Right lobe of liver (tissue), 6 donors: ENCODE measurements at regions of chr6 and their contacts with region 1.

Region 1: DNA sequence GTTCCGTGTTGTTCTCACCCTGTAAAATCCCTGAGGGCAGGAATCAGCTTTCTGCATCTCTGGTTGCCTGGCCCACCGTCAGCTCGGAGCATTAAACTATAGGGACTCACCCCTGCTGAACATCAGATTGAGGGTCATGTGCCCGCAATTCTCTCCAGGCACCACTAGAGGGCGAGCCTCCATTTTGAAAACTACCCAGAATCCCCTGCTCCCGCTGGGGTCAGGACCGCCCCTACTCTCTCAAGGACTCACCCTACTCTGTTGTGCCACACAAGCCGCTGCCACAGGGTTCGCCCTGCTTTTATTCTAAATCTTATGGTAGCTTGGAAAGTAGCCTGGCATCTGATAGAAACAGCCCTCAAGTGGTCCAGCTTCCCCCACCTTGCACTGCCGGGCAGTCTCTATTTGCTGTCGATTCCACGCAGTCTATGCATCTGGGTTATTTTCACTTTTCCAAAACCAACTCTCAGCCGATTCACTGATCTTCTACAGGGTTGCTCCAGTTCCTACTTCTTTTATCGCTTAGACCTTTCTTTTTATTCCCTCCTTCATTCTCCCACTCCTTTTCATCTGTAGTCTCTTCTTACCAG is 244.1 kb upstream of the QKI start:
- DNase-seq: no peak
- ATAC-seq: peak in 3 of 4 donors; percentile 40 to 77 (median 40)
- H3K4me3 ChIP-seq: no peak overlapping the region
- H3K27ac ChIP-seq: no peak overlapping the region
- H3K4me1 ChIP-seq: no peaks in the 10 kb centered on the region
- H3K27me3 ChIP-seq: no peaks in the 10 kb centered on the region
- CTCF ChIP-seq: peak; percentile 35 to 64 (median 56)
- POLR2A ChIP-seq: no peak

Region 2: DNA sequence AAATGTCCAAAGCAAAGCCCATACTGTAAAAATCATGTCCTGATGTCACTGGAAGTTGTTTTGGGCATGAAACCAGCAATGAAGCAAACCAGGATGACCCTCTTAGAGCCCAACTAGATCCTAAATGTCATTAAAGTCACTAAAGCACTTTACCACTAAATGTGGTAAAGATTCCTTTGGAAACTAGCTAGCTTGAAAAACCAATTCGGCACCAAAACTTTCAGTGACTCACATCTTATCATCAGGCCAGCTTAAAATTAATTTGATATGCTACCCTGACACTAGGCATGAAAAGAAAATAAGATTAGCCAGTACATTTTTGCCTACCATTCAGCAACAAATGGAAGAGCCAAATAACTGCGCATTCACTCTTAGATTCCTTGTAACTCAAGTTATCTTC is 296.9 kb before region 1 on chr6:
- intact Hi-C with region 1: no loop called
- DNase-seq: no peak
- ATAC-seq: no peak
- H3K4me3 ChIP-seq: no peak overlapping the region
- H3K27ac ChIP-seq: no peak overlapping the region
- H3K4me1 ChIP-seq: no peaks in the 10 kb centered on the region
- H3K27me3 ChIP-seq: no peaks in the 10 kb centered on the region
- CTCF ChIP-seq: no peak
- POLR2A ChIP-seq: no peak

Region 3: GRCh38 chr6:163965426-163966348 is 795.3 kb after region 1 on chr6:
- intact Hi-C with region 1: loop called in 1 of 2 experiments (anchors 10 kb)
- DNase-seq: no peak
- ATAC-seq: peak in 3 of 4 donors; percentile 30 to 45 (median 33)
- H3K4me3 ChIP-seq: no peak overlapping the region
- H3K27ac ChIP-seq: no peak overlapping the region
- H3K4me1 ChIP-seq: no peaks in the 10 kb centered on the region
- H3K27me3 ChIP-seq: no peaks in the 10 kb centered on the region
- CTCF ChIP-seq: no peak
- POLR2A ChIP-seq: no peak